Ovary (tissue), 10 donors: ENCODE measurements at regions of chr2 and their contacts with region 1.

Region 1: GRCh38 chr2:58304843-58305242 is 63.7 kb upstream of the FANCL start:
- DNase-seq: no peak
- H3K4me3 ChIP-seq: no peak overlapping the region
- H3K27ac ChIP-seq: no peak overlapping the region
- H3K4me1 ChIP-seq: no peaks in the 10 kb centered on the region
- H3K27me3 ChIP-seq: no peaks in the 10 kb centered on the region
- CTCF ChIP-seq: no peak
- EP300 ChIP-seq: no peak
- POLR2A ChIP-seq: no peak

Region 2: GRCh38 chr2:58289029-58289428 is 15.8 kb before region 1 on chr2:
- intact Hi-C with region 1: loop called in 1 of 4 experiments (anchors 1 kb)
- DNase-seq: no peak
- H3K4me3 ChIP-seq: no peak overlapping the region
- H3K27ac ChIP-seq: no peak overlapping the region
- H3K4me1 ChIP-seq: no peaks in the 10 kb centered on the region
- H3K27me3 ChIP-seq: no peaks in the 10 kb centered on the region
- CTCF ChIP-seq: no peak
- EP300 ChIP-seq: no peak
- POLR2A ChIP-seq: no peak

Region 3: GRCh38 chr2:58350484-58350883 is 45.6 kb after region 1 on chr2:
- intact Hi-C with region 1: no loop called
- DNase-seq: no peak
- H3K4me3 ChIP-seq: no peak overlapping the region
- H3K27ac ChIP-seq: no peak overlapping the region
- H3K4me1 ChIP-seq: no peaks in the 10 kb centered on the region
- H3K27me3 ChIP-seq: no peaks in the 10 kb centered on the region
- CTCF ChIP-seq: no peak
- EP300 ChIP-seq: no peak
- POLR2A ChIP-seq: no peak